Activated CD4-positive, alpha-beta T cell treated with anti-CD3 and anti-CD28 coated beads for 36 hours (primary cell): ENCODE measurements at regions of chr12 and their contacts with region 1.

Region 1: GRCh38 chr12:119988782-119989668 is at the start of gene BICDL1:
- DNase-seq: peak; percentile 99
- ATAC-seq: peak; percentile 87
- H3K4me3 Mint-ChIP-seq: peak within 1 kb of the TSS; percentile 90
- H3K27ac Mint-ChIP-seq: peak within 1 kb of the TSS; percentile 92
- H3K4me1 Mint-ChIP-seq: peaks cover 46% of the 10 kb centered on the region
- H3K27me3 Mint-ChIP-seq: no peaks in the 10 kb centered on the region
- total RNA-seq, gene BICDL1: 106 to 132 TPM

Region 2: GRCh38 chr12:119667577-119668323 is 321.3 kb before region 1 on chr12 and contains the start of gene PRKAB1:
- CTCF ChIA-PET with region 1: no interaction called
- POLR2A ChIA-PET with region 1: no interaction called
- intact Hi-C with region 1: loop called (anchors 2 to 5 kb)
- DNase-seq: peak; percentile 98
- ATAC-seq: peak; percentile 96
- H3K4me3 Mint-ChIP-seq: peak within 1 kb of the TSS; percentile 91
- H3K27ac Mint-ChIP-seq: peak within 1 kb of the TSS; percentile 91
- H3K4me1 Mint-ChIP-seq: peaks cover 48% of the 10 kb centered on the region
- H3K27me3 Mint-ChIP-seq: no peaks in the 10 kb centered on the region
- total RNA-seq, gene PRKAB1: 18.0 to 21.7 TPM

Region 3: DNA sequence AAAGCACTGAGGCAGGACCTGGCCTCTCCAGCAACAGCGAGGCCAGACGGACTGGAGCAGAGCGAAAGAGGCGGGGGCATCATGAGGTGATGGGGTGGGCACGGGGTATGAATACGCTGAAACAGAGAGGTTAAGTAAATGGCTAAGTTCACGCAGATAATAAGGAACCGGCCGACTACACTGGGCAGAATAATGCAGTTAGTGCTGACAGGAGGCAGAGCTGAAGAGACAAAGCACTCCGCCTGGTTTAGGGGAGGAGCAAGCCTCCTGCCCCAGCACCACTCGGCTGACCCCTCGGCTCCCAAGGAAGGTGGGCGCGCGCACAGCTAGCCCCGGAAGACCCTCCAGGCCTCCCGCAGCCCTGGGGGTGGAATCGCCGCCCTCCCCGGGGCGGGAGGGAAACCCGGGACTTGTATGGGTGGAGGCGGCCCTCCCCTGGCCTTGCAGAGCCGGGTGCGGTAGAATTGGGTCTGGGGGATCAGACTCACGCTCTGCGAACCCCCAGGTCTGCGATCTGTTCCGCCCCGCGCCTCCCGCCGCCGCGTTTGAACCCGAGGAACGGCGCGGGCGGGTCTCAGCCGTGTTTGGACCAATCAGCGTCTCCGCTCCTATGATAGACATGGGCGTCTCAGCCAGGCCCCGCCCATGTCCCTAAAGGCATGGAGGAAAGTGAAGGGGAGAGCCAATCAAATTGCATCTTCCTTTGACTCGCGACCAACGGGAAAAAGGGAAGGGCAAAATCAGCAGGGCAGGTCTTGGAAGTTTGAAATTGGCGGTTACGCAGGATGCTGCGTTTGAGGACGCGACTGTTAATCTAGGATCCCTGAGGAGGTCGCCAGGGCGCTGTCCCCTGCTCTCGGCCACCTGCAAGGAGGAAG is 112.0 kb before region 1 on chr12 and contains the start of gene CIT:
- CTCF ChIA-PET with region 1: no interaction called
- POLR2A ChIA-PET with region 1: no interaction called
- intact Hi-C with region 1: loop called in 1 of 2 experiments (anchors 1 kb)
- DNase-seq: peak; percentile 93
- ATAC-seq: peak; percentile 100
- H3K4me3 Mint-ChIP-seq: peak within 1 kb of the TSS; percentile 82
- H3K27ac Mint-ChIP-seq: peak within 1 kb of the TSS; percentile 63
- H3K4me1 Mint-ChIP-seq: peaks cover 13% of the 10 kb centered on the region
- H3K27me3 Mint-ChIP-seq: no peaks in the 10 kb centered on the region
- total RNA-seq, gene CIT: 54.6 to 71.5 TPM

Region 4: GRCh38 chr12:119956018-119956417 is 33.0 kb before region 1 on chr12:
- CTCF ChIA-PET with region 1: no interaction called
- POLR2A ChIA-PET with region 1: no interaction called
- intact Hi-C with region 1: no loop called
- DNase-seq: no peak
- ATAC-seq: no peak
- H3K4me3 Mint-ChIP-seq: no peak overlapping the region
- H3K27ac Mint-ChIP-seq: no peak overlapping the region
- H3K4me1 Mint-ChIP-seq: no peaks in the 10 kb centered on the region
- H3K27me3 Mint-ChIP-seq: no peaks in the 10 kb centered on the region

Region 5: DNA sequence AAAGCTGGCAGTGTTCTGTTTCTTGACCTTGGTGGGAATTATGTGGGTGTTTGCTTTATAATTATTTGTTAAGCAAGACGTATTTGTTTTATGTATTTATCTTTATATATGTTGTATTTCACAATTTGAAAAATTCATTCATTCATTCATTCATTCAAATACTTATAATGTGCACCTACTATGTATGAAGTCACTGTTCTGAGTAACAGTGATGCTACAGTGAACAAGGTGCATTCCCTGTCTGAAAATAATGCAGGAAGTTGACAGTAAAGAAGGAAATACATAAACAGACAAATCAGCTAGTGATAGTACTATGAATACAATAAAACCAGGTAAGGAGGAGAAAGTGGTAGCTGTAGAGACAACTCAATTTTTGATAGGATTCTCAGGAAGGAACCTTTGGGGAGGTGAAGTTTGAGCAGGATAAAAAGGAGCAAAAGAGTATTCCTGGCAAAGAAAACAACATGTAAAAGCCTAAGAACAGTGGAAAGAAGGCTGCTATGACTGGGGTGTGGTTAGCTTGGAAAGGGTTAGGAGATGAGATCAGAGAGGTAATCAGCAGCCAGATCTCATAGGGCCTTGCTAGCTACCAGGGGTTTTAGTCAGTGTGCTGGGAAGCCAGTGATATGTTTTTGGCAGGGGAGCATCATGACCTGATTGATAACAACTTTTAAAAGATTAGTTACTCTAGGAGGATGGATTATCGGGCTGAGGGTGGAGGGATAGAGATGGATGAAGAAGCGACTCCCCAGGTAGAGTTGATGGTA is 17.4 kb after region 1 on chr12:
- CTCF ChIA-PET with region 1: interaction called, 16 read pairs
- POLR2A ChIA-PET with region 1: interaction called, 98 read pairs
- intact Hi-C with region 1: loop called (anchors 1 to 2 kb)
- DNase-seq: peak; percentile 69
- ATAC-seq: peak; percentile 80
- H3K4me3 Mint-ChIP-seq: peak overlapping the region; percentile 63
- H3K27ac Mint-ChIP-seq: peak overlapping the region; percentile 100
- H3K4me1 Mint-ChIP-seq: peaks cover 85% of the 10 kb centered on the region
- H3K27me3 Mint-ChIP-seq: no peaks in the 10 kb centered on the region

Region 6: DNA sequence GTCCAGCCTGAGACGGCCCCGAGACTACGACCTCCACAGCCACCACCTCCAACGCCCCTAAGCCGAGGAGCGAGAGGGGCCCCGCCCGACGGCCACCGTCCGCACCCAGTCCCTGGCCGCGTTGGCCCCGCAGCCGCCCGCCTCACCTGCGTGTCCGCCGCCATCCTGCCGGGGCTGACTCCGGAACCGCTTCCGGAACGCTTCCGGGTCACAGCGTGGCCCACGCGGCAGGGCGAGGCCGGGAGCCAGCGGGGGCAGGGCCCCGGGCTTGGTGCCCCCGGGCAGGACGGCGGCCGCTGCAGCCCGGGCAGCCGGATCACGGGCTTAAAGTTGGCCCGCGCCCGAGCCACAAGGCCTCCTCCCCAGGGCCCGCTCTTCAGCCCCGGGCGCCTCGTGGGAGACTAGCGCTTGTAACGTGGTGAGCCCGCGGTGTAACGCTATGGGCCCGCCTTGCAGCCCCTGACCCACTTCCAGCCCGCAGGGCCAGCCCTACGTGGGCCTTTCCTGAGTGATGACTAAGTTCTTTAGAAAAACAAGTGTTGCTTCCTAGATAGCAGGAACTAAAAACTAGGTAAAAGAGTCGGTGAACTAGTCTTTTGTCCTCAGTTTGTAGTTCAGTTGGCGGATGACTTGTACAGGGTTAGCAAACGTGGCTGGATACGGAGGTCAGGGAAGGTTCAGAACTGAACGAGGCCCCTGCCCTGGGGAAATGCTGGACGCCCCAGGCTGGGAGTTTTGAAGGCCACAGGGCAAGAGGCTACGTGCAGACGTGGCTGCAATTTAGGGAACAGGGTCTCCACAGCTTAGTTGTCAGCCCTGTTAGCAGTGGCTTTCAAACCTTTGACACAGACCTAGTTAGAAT is 205.7 kb after region 1 on chr12 and contains the start of gene GCN1:
- CTCF ChIA-PET with region 1: interaction called, 3 read pairs
- POLR2A ChIA-PET with region 1: interaction called, 4 read pairs
- intact Hi-C with region 1: loop called in 1 of 2 experiments (anchors 1 kb)
- DNase-seq: peak; percentile 93
- ATAC-seq: peak; percentile 81
- H3K4me3 Mint-ChIP-seq: peak within 1 kb of the TSS; percentile 98
- H3K27ac Mint-ChIP-seq: peak within 1 kb of the TSS; percentile 92
- H3K4me1 Mint-ChIP-seq: peaks cover 45% of the 10 kb centered on the region
- H3K27me3 Mint-ChIP-seq: no peaks in the 10 kb centered on the region
- total RNA-seq, gene GCN1: 125 to 139 TPM

Region 7: DNA sequence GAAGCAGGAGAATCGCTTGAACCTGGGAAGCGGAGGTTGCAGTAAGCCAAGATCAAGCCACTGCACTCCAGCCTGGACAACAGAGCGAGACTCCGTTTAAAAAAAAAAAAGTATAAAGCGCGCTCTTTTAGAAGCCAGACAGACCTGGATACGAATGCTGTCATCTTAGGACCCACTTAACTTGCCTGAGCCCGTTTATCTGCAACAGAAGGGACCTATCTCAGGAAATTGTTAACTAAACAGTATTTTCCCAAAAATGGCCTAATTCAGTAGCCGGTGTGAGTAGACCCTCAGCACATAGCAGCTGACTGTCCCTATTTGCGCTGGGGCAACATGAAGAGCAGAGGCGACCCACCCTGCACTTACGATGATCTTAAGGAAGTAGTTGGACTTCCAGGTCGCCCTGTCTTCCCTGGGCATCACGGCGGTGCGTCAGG is 211.4 kb after region 1 on chr12:
- CTCF ChIA-PET with region 1: interaction called, 6 read pairs
- POLR2A ChIA-PET with region 1: interaction called, 19 read pairs
- intact Hi-C with region 1: loop called in 1 of 2 experiments (anchors 1 kb)
- DNase-seq: no peak
- ATAC-seq: no peak
- H3K4me3 Mint-ChIP-seq: peak overlapping the region; percentile 98
- H3K27ac Mint-ChIP-seq: peak overlapping the region; percentile 99
- H3K4me1 Mint-ChIP-seq: peaks cover 39% of the 10 kb centered on the region
- H3K27me3 Mint-ChIP-seq: no peaks in the 10 kb centered on the region